PC-9 (cell line): ENCODE measurements at regions of chr18 and their contacts with region 1.

Region 1: GRCh38 chr18:58069721-58070292 is 25.8 kb downstream of the NEDD4L start:
- DNase-seq: no peak
- H3K4me3 ChIP-seq: no peak overlapping the region
- H3K27ac ChIP-seq: peak overlapping the region; percentile 1; the same call in 1 of the 2 replicates
- H3K4me1 ChIP-seq: no peaks in the 10 kb centered on the region
- H3K27me3 ChIP-seq: no peaks in the 10 kb centered on the region
- CTCF ChIP-seq: no peak

Region 2: DNA sequence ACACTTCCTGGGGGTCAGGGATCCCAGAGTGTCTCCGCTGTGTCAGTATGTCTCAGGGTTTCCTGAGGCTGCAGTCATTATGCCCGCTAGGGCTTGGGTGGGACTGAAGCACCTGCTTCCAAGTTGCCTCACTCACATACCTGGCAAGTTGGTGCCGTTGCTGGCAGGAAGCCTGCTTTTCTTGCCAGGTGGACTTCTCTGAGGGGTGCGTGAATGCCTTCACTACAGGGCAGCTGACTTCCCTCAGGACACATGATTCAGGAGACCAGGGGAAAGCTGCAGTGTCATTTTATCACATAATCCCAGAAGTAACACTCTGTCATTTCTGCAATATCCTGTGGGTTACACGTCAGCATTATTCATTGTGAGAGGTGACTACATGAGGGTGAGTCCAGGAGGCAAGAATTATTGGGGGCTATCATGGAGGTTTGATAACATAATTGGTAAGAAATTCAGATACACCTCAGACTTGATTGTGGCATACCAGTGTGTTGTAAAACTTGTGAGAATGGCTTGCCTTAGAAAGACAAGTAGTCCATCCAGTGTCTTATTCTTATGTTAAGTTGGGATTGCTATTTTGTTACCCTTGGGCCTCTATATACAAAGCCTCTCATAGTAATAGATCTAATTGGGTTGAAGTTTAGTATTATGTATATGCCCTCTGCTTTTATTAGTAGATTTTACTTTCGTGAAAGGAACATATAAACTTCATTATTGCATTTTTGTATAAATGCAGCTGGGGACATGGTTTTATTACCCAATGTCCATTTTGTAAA is 18.3 kb after region 1 on chr18:
- CTCF ChIA-PET with region 1: no interaction called
- POLR2A ChIA-PET with region 1: interaction called, 11 read pairs
- intact Hi-C with region 1: no loop called
- DNase-seq: peak; percentile 86 to 100
- H3K4me3 ChIP-seq: no peak overlapping the region; the same call in 1 of the 2 replicates
- H3K27ac ChIP-seq: peak overlapping the region; percentile 97
- H3K4me1 ChIP-seq: peaks cover 78% of the 10 kb centered on the region
- H3K27me3 ChIP-seq: no peaks in the 10 kb centered on the region
- CTCF ChIP-seq: no peak